HAP-1 (cell line): ENCODE measurements at regions of chrX and their contacts with region 1.

Region 1: DNA sequence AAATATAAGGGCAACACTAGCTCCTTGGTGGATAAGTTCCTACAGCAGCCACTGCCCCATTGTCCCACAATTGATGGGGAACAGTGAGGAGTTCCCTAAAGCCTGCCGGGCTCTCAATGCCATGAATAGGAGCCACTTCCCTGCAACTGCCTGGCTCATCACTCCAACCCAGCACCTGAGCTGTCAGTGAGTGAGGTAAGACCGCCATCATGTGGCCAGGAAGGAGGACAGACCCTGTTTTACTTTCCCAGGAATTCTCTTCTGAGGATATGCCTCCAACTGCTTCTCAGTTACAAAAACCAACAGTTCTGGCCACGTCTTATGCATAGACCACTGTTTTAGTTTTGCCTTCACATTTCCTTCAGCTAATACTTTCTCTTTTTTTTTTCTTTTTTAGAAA is 45.5 kb downstream of the SRPX start:
- DNase-seq: peak; percentile 59 to 67
- H3K4me3 ChIP-seq: no peak overlapping the region
- H3K4me1 ChIP-seq: no peaks in the 10 kb centered on the region
- H3K27me3 ChIP-seq: no peaks in the 10 kb centered on the region

Region 2: DNA sequence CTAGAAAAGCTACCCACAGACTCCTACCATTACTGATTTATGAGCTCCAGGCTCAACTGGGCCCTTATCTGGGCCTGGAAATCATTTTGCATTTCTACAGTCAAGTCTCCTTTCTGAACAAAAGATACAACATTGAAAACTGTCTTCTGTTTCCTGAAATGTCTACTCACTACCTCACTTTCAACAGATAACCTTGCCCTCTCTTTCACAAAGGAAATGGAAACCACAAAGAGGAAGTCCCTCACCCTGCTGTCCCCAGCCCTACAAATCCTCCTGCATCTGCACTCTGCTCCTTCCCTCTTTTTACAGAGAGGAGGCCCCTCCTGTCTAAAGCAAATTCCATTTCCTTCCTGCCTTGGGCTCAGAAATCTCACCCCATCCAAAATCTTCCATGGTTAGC is 420.1 kb before region 1 on chrX:
- in situ Hi-C with region 1: loop called (anchors 10 kb)
- DNase-seq: no peak
- H3K4me3 ChIP-seq: no peak overlapping the region
- H3K4me1 ChIP-seq: no peaks in the 10 kb centered on the region
- H3K27me3 ChIP-seq: no peaks in the 10 kb centered on the region

Region 3: GRCh38 chrX:37926700-37927099 is 248.4 kb before region 1 on chrX:
- in situ Hi-C with region 1: loop called (anchors 10 kb)
- DNase-seq: peak in 1 of 2 experiments; percentile 55
- H3K4me3 ChIP-seq: no peak overlapping the region
- H3K4me1 ChIP-seq: no peaks in the 10 kb centered on the region
- H3K27me3 ChIP-seq: peaks cover 4% of the 10 kb centered on the region; the same call in 1 of the 2 replicates